CD8-positive, alpha-beta memory T cell (primary cell): ENCODE measurements at regions of chr7 and their contacts with region 1.

Region 1: DNA sequence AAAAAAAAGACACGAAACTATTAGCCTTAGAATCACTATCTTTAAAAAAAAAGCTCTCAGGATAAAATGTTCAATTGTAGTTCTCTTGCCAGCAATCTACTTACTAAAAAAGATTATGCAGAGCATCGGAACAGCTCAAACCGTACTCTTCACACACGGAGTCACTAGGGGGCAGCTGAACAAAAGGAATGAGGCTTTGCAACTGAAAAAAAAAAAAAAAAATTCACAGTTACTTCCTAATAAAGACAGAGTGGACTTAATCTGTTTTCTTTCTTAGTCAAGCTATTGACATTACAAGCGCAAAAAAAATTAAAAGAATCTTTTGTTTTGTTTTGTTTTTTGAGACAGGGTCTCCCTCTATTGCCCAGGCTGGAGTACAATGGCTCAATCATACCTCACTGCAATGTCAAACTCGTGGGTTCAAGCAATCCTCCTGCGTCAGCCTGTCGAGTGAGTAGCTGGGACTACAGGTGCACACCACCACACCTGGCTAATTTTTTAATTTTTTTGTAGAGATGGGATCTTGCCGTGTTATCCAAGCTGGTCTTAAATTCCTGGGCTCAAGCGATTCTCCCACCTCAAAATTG is 11.5 kb downstream of the PMS2 start:
- DNase-seq: peak; percentile 19 to 67 (median 50)
- H3K4me3 ChIP-seq: no peak overlapping the region
- H3K4me3 Mint-ChIP-seq: no peak overlapping the region
- H3K27ac ChIP-seq: no peak overlapping the region
- H3K27ac Mint-ChIP-seq: peak overlapping the region in 2 of 8 donors; percentile 21 to 64
- H3K4me1 ChIP-seq: no peaks in the 10 kb centered on the region
- H3K4me1 Mint-ChIP-seq: peaks cover 0 to 3% (median 0%) of the 10 kb centered on the region in 3 donors
- H3K27me3 ChIP-seq: no peaks in the 10 kb centered on the region
- H3K27me3 Mint-ChIP-seq: no peaks in the 10 kb centered on the region

Region 2: DNA sequence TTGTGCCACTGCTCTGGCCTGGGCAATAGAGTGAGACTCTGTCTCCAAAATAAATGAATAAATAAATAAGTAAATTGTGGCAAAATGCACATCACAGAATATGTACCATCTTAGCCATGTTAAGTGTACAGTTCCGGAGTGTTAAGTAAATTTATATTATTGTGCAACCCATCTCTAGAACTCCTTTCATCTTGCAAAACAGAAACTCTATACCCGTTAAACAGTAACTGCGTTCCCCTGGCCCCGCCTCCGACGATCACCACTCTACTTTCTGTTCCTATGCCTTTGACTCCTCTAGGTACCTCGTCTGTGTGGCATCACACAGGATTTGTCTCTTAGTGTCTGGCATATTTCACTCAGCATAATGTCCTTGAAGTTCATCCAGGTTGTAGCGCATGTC is 1671.6 kb before region 1 on chr7:
- CTCF ChIA-PET with region 1: no interaction called
- POLR2A ChIA-PET with region 1: no interaction called
- DNase-seq: no peak
- H3K4me3 ChIP-seq: no peak overlapping the region
- H3K4me3 Mint-ChIP-seq: no peak overlapping the region
- H3K27ac ChIP-seq: no peak overlapping the region
- H3K27ac Mint-ChIP-seq: no peak overlapping the region
- H3K4me1 ChIP-seq: no peaks in the 10 kb centered on the region
- H3K4me1 Mint-ChIP-seq: no peaks in the 10 kb centered on the region
- H3K27me3 ChIP-seq: no peaks in the 10 kb centered on the region
- H3K27me3 Mint-ChIP-seq: peaks cover 0 to 8% of the 10 kb centered on the region in 2 donors

Region 3: DNA sequence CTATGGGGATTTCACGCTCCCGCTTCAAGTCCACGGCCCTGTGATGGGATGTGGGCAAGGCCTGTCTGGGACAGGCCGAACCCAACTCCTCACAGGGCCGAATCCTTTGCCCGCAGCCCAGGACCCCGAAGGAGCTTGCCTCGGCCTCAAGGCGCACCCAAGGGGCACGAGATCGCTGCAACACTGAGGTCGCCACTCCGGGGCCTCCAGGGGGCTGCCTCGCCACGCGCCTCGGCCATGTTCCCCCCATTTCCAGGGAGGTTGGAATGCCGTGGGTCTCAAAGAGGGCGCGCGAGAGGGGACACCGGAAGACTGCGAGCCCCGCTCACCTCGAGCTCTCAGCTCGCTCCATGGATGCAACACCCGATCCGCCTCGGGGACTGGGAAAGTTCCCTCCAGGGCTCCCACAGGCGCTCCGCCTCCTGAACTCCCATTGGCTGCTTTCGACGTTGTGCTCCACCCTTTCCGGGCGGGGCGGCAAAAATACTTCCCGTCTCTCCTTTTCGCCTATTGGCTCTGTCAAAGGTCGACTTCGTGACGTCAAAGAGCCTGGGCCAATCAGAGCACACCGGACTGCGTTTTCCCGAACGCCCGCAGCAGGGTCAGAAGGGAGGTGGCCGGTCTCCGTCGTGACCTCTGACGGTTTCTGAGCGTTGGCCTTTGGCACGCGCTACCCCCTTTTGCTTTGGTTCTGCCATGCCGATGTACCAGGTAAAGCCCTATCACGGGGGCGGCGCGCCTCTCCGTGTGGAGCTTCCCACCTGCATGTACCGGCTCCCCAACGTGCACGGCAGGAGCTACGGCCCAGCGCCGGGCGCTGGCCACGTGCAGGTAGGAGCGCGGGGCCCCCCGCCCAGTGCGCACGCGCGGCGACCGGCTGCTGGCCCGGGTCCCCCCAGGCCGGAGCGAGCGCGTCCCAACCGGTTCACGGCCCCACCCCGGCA is 11.6 kb after region 1 on chr7 and contains the starts of genes AIMP2 and PMS2:
- CTCF ChIA-PET with region 1: interaction called, 15 read pairs
- POLR2A ChIA-PET with region 1: interaction called, 11 read pairs
- DNase-seq: peak; percentile 93 to 96 (median 94)
- H3K4me3 ChIP-seq: peak within 1 kb of the TSS; percentile 88
- H3K4me3 Mint-ChIP-seq: peak within 1 kb of the TSS; percentile 91 to 98 (median 94)
- H3K27ac ChIP-seq: peak within 1 kb of the TSS; percentile 88
- H3K27ac Mint-ChIP-seq: peak within 1 kb of the TSS; percentile 88 to 97 (median 96)
- H3K4me1 ChIP-seq: peaks cover 6% of the 10 kb centered on the region
- H3K4me1 Mint-ChIP-seq: peaks cover 31 to 54% (median 43%) of the 10 kb centered on the region in 3 donors
- H3K27me3 ChIP-seq: no peaks in the 10 kb centered on the region
- H3K27me3 Mint-ChIP-seq: no peaks in the 10 kb centered on the region
- total RNA-seq, gene AIMP2: 80.0 to 82.5 TPM
- total RNA-seq, gene PMS2: 22.6 to 26.0 TPM

Region 4: GRCh38 chr7:6032641-6033040 is 35.3 kb after region 1 on chr7:
- CTCF ChIA-PET with region 1: no interaction called
- POLR2A ChIA-PET with region 1: no interaction called
- DNase-seq: no peak
- H3K4me3 ChIP-seq: no peak overlapping the region
- H3K4me3 Mint-ChIP-seq: peak overlapping the region in 2 of 7 donors; percentile 12 to 35
- H3K27ac ChIP-seq: no peak overlapping the region
- H3K27ac Mint-ChIP-seq: peak overlapping the region in 7 of 8 donors; percentile 17 to 64 (median 40)
- H3K4me1 ChIP-seq: peaks cover 6% of the 10 kb centered on the region
- H3K4me1 Mint-ChIP-seq: peaks cover 27 to 30% (median 28%) of the 10 kb centered on the region in 3 donors
- H3K27me3 ChIP-seq: no peaks in the 10 kb centered on the region
- H3K27me3 Mint-ChIP-seq: no peaks in the 10 kb centered on the region

Region 5: DNA sequence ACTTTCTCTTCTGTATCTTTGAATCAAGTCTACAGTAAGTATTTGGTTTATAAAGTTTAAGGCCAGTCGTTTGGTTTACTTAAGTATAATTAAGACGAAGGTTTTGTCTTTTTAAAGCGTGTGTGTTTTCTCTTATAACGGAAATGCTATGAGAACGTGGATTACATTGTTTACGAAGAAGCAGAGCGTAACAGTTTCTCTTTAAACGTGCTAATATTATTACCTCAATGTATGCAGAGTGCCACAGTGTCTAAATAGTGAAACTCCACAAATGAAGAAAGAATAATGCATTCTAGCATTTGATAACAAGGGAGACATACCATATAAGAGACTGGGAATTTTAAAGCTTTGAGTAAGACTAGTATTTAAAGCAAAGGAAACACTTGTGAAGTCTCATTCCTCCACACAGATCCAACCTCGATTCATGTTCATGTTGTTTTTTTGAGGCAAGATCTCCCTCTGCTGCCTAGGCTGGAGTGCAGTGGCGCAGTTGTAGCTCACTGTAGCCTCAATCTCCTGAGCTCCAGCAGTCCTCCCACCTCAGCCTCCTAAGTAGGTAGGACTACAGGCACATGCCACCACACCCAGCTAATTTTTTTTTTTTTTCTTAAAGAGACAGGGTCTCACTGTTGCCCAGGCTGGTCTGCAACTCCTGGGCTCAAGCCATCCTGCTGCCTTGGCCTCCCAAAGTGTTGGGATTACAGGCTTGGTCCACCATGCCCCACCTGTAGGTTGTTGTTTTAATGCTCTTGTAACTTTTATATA is 109.0 kb after region 1 on chr7:
- CTCF ChIA-PET with region 1: interaction called, 18 read pairs
- POLR2A ChIA-PET with region 1: interaction called, 3 read pairs
- DNase-seq: peak; percentile 17 to 60 (median 41)
- H3K4me3 ChIP-seq: peak overlapping the region; percentile 78
- H3K4me3 Mint-ChIP-seq: peak overlapping the region; percentile 90 to 97 (median 93)
- H3K27ac ChIP-seq: peak overlapping the region; percentile 86
- H3K27ac Mint-ChIP-seq: peak overlapping the region; percentile 94 to 99 (median 97)
- H3K4me1 ChIP-seq: peaks cover 14% of the 10 kb centered on the region
- H3K4me1 Mint-ChIP-seq: peaks cover 35 to 55% (median 41%) of the 10 kb centered on the region in 3 donors
- H3K27me3 ChIP-seq: no peaks in the 10 kb centered on the region
- H3K27me3 Mint-ChIP-seq: peaks cover 0 to 2% of the 10 kb centered on the region in 2 donors

Region 6: DNA sequence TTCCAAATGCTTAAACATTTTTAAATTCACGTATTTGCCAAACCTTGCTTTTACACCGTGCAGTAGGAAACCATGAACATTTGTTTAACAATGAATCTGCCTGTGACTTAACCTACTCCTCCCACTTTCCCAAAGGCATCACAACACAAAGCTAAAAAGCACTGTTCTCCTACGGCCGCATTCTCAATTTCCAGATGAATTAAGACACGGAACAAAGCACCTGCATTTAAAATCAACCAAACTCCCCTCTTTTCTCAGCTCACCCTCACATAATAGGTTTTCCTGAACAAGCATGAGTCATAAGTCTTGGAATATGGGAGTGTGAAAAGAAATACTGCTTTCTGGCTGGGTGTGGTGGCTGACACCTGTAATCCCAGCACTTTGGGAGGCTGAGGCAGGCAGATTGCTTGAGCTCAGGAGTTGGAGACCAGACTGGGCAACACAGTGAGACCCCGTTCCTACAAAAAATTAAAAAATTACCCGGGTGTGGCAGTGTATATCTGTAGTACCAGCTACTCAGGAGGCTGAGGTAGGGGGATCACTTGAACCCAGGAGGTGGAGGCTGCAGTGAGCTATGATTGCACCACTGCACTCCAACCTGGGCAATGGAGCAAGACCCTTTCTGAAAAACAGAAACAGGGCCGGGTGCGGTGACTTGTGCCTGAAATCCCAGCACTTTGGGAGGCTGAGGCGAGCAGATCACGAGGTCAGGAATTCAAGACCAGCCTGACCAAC is 326.8 kb after region 1 on chr7:
- CTCF ChIA-PET with region 1: interaction called, 15 read pairs
- POLR2A ChIA-PET with region 1: no interaction called
- DNase-seq: no peak
- H3K4me3 ChIP-seq: no peak overlapping the region
- H3K4me3 Mint-ChIP-seq: no peak overlapping the region
- H3K27ac ChIP-seq: no peak overlapping the region
- H3K27ac Mint-ChIP-seq: peak overlapping the region in 1 of 8 donors; percentile 66
- H3K4me1 ChIP-seq: no peaks in the 10 kb centered on the region
- H3K4me1 Mint-ChIP-seq: peaks cover 4 to 5% (median 4%) of the 10 kb centered on the region in 3 donors
- H3K27me3 ChIP-seq: no peaks in the 10 kb centered on the region
- H3K27me3 Mint-ChIP-seq: peaks cover 0 to 8% of the 10 kb centered on the region in 2 donors